ENCODE measurements at regions of chr5 and their contacts with region 1.

Region 1: DNA sequence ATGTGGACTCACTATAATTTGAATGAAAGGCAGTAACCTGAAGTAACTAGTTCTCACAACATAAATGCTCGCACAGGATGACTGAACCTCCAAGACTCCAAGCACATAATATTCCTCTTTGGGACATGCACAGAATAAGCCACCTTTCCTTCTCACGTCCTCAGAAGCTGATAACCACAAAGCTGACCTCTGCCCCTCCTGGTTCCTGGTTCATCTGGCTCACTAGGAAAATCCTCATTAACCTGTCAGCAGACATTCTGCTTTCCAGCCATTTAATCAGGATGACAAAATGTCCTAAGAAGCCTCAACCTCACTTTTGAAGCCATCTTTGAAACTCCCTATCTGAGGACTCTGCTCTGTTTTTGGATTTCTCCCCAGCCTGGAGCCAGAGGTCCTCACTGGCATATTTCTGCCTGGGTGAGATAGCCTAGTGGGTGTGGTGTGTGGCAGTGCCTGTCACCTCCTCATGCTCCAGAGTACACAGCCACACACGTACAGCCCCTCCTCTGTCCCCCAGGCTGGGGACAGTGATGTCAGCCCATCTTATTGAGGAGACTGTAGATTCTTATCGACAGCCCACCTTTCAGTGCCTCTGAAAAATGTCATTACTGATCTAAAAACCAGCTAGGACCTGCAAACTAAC is 10.3 kb downstream of the ANKH start:
- DNase-seq: no peak
- ATAC-seq: no peak
- H3K4me3 ChIP-seq: no peak overlapping the region
- H3K27ac ChIP-seq: peak overlapping the region in 1 of 2 donors; percentile 57
- H3K4me1 ChIP-seq: peaks cover 11 to 14% of the 10 kb centered on the region in 2 donors
- H3K27me3 ChIP-seq: no peaks in the 10 kb centered on the region

Region 2: GRCh38 chr5:14767735-14768507 is 93.3 kb before region 1 on chr5:
- intact Hi-C with region 1: no loop called
- DNase-seq: no peak
- ATAC-seq: no peak
- H3K4me3 ChIP-seq: no peak overlapping the region
- H3K27ac ChIP-seq: no peak overlapping the region
- H3K4me1 ChIP-seq: peaks cover 0 to 2% of the 10 kb centered on the region in 2 donors
- H3K27me3 ChIP-seq: no peaks in the 10 kb centered on the region

Region 3: GRCh38 chr5:14816999-14817761 is 44.1 kb before region 1 on chr5:
- intact Hi-C with region 1: loop called in 1 of 2 experiments (anchors 5 kb)
- DNase-seq: peak in 1 of 2 donors; percentile 80
- ATAC-seq: peak; percentile 75
- H3K4me3 ChIP-seq: no peak overlapping the region
- H3K27ac ChIP-seq: peak overlapping the region in 1 of 2 donors; percentile 49
- H3K4me1 ChIP-seq: peaks cover 3 to 13% of the 10 kb centered on the region in 2 donors
- H3K27me3 ChIP-seq: no peaks in the 10 kb centered on the region

Region 4: GRCh38 chr5:15044521-15044920 is 183.3 kb after region 1 on chr5:
- intact Hi-C with region 1: no loop called
- DNase-seq: no peak
- ATAC-seq: no peak
- H3K4me3 ChIP-seq: no peak overlapping the region
- H3K27ac ChIP-seq: no peak overlapping the region
- H3K4me1 ChIP-seq: no peaks in the 10 kb centered on the region
- H3K27me3 ChIP-seq: no peaks in the 10 kb centered on the region